Mammary epithelial cell (primary cell): ENCODE measurements at regions of chr16 and their contacts with region 1.

Region 1: GRCh38 chr16:67470359-67470758 is 10.6 kb downstream of the ATP6V0D1 start:
- DNase-seq: no peak
- H3K4me3 ChIP-seq: no peak overlapping the region
- H3K27ac ChIP-seq: no peak overlapping the region
- H3K4me1 ChIP-seq: peaks cover 10% of the 10 kb centered on the region
- H3K27me3 ChIP-seq: no peaks in the 10 kb centered on the region
- CTCF ChIP-seq: no peak

Region 2: GRCh38 chr16:67349172-67349571 is 121.2 kb before region 1 on chr16:
- CTCF ChIA-PET with region 1: no interaction called
- dilution Hi-C with region 1: no loop called
- in situ Hi-C with region 1: no loop called
- intact Hi-C with region 1: loop called (anchors 1 kb)
- DNase-seq: peak; percentile 20
- H3K4me3 ChIP-seq: no peak overlapping the region
- H3K27ac ChIP-seq: no peak overlapping the region
- H3K4me1 ChIP-seq: no peaks in the 10 kb centered on the region
- H3K27me3 ChIP-seq: no peaks in the 10 kb centered on the region
- CTCF ChIP-seq: peak; percentile 52 to 55

Region 3: DNA sequence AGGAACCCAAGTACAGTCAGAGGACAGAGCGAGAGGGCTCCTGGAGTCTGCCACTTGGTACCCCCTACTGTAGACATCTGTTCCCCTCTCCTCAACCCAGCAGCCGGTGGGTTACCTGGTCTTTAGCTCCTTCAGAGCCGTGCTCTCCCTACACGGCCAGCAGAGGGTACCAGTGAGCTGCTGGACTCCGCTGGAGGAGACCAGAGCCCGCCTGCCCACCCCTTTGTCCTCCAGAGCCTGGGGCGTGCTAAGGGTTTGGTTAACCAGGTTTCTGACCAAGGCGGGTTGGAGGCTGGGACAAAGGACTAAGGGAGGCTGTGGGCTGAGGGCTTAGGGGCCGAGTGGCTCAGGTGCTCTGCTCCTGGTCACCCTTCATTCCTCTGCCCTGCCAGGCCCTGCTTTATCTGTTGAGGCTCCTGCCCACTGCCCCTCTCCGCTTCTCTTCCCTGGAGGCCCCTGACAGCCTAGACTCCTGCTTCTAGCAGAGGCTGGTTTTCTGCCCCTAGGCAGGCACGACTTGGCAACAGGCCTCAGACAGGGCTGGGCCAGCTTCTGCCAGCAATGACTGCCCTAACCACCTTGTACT is 42.1 kb before region 1 on chr16:
- CTCF ChIA-PET with region 1: no interaction called
- dilution Hi-C with region 1: no loop called
- in situ Hi-C with region 1: no loop called
- intact Hi-C with region 1: loop called (anchors 1 kb)
- DNase-seq: peak; percentile 39
- H3K4me3 ChIP-seq: no peak overlapping the region
- H3K27ac ChIP-seq: no peak overlapping the region
- H3K4me1 ChIP-seq: peaks cover 13% of the 10 kb centered on the region
- H3K27me3 ChIP-seq: peaks cover 2% of the 10 kb centered on the region
- CTCF ChIP-seq: peak; percentile 81 to 97